K562 (cell line): ENCODE measurements at regions of chr19 and their contacts with region 1.

Region 1: GRCh38 chr19:36573020-36573885 is at the start of gene ZNF529:
- DNase-seq: peak; percentile 86 to 95 (median 89)
- ATAC-seq: peak; percentile 97
- H3K4me3 ChIP-seq: peak within 1 kb of the TSS; percentile 91
- H3K27ac ChIP-seq: peak within 1 kb of the TSS; percentile 96
- H3K4me1 ChIP-seq: peaks cover 0 to 9% of the 10 kb centered on the region in 2 experiments; a peak in 2 of 5 replicates
- H3K27me3 ChIP-seq: no peaks in the 10 kb centered on the region
- CTCF ChIP-seq: peak in 1 of 3 experiments; percentile 2; a peak in 1 of 6 replicates
- EP300 ChIP-seq: no peak; the same call in 1 of the 2 replicates
- POLR2A ChIP-seq: peak; percentile 96
- RAD21 ChIP-seq: no peak
- polyA plus RNA-seq, gene ZNF529: 2.4 to 3.2 TPM

Region 2: DNA sequence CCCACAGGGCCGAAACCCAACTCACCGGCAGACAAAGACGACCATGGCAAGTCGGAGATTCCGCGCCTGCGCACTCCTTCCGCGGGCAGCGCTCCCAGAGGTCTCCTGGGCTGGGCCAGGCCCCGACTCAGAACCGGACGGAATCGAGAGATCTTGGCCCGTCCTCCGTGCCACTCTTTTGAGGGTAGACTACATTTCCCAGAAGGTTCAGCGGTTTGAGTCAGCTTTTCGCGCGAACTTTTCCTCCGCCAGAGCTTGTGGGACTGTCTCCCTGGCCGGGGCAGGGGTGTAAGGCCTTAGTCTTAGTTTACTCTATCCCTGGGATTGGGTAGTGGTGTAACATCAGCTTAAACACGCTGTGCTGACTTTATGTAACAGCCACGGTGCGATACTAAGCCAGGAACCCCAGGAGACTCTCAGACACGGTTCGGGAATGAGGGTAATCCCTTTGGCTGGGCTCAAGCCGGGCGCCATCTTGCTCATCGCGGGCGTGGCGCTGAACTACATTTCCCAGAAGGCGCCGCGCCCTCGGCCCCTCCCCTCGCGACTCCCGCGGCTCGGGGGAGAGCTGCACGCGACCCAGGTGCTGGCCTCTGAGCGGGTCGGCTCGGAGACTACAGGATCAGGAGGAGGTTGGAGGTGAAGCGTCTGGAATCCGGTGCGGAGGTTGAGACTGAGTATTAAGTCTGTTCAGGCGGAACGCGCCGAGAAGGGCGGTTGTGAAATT is 44.9 kb before region 1 on chr19 and contains the start of gene ZNF260:
- CTCF ChIA-PET with region 1: no interaction called
- POLR2A ChIA-PET with region 1: interaction called, 8 read pairs
- in situ Hi-C with region 1: no loop called
- intact Hi-C with region 1: loop called (anchors 1 kb)
- DNase-seq: peak; percentile 89 to 94 (median 92)
- ATAC-seq: peak; percentile 96
- H3K4me3 ChIP-seq: peak within 1 kb of the TSS; percentile 72
- H3K27ac ChIP-seq: peak within 1 kb of the TSS; percentile 99
- H3K4me1 ChIP-seq: peaks cover 3 to 4% of the 10 kb centered on the region in 2 experiments; a peak in 3 of 5 replicates
- H3K27me3 ChIP-seq: no peaks in the 10 kb centered on the region
- CTCF ChIP-seq: peak in 1 of 3 experiments; percentile 13; a peak in 1 of 6 replicates
- EP300 ChIP-seq: 0 out of 2 replicates have a peak, but pooled peaks have one; percentile 1
- POLR2A ChIP-seq: peak; percentile 89
- RAD21 ChIP-seq: no peak; a peak in 1 of 4 replicates
- polyA plus RNA-seq, gene ZNF260: 2.6 to 3.7 TPM